ENCODE measurements at regions of chr15 and their contacts with region 1.

Region 1: GRCh38 chr15:90233376-90234095 is at the start of gene CIB1:
- DNase-seq: peak; percentile 98
- H3K4me3 Mint-ChIP-seq: peak within 1 kb of the TSS; percentile 89
- H3K27ac Mint-ChIP-seq: peak within 1 kb of the TSS; percentile 90
- H3K4me1 Mint-ChIP-seq: peaks cover 49% of the 10 kb centered on the region
- H3K27me3 Mint-ChIP-seq: no peaks in the 10 kb centered on the region
- total RNA-seq, gene CIB1: 156 to 171 TPM

Region 2: GRCh38 chr15:89893696-89894455 is 339.7 kb before region 1 on chr15 and contains the start of gene AP3S2:
- CTCF ChIA-PET with region 1: interaction called, 3 read pairs
- intact Hi-C with region 1: loop called (anchors 1 kb)
- DNase-seq: peak; percentile 94
- H3K4me3 Mint-ChIP-seq: peak within 1 kb of the TSS; percentile 97
- H3K27ac Mint-ChIP-seq: peak within 1 kb of the TSS; percentile 96
- H3K4me1 Mint-ChIP-seq: peaks cover 42% of the 10 kb centered on the region
- H3K27me3 Mint-ChIP-seq: no peaks in the 10 kb centered on the region
- total RNA-seq, gene AP3S2: 20.2 to 25.2 TPM

Region 3: GRCh38 chr15:90037961-90038631 is 195.4 kb before region 1 on chr15:
- CTCF ChIA-PET with region 1: no interaction called
- intact Hi-C with region 1: loop called (anchors 5 kb)
- DNase-seq: peak; percentile 86
- H3K4me3 Mint-ChIP-seq: no peak overlapping the region
- H3K27ac Mint-ChIP-seq: peak overlapping the region; percentile 92
- H3K4me1 Mint-ChIP-seq: peaks cover 69% of the 10 kb centered on the region
- H3K27me3 Mint-ChIP-seq: no peaks in the 10 kb centered on the region

Region 4: GRCh38 chr15:90143166-90143655 is 90.3 kb before region 1 on chr15:
- CTCF ChIA-PET with region 1: interaction called, 6 read pairs
- intact Hi-C with region 1: loop called (anchors 1 kb)
- DNase-seq: peak; percentile 86
- H3K4me3 Mint-ChIP-seq: peak overlapping the region; percentile 24
- H3K27ac Mint-ChIP-seq: no peak overlapping the region
- H3K4me1 Mint-ChIP-seq: peaks cover 21% of the 10 kb centered on the region
- H3K27me3 Mint-ChIP-seq: no peaks in the 10 kb centered on the region

Region 5: GRCh38 chr15:90201130-90201949 is 32.2 kb before region 1 on chr15 and contains the start of gene SEMA4B:
- CTCF ChIA-PET with region 1: interaction called, 4 read pairs
- intact Hi-C with region 1: loop called (anchors 1 kb)
- DNase-seq: peak; percentile 72
- H3K4me3 Mint-ChIP-seq: peak within 1 kb of the TSS; percentile 77
- H3K27ac Mint-ChIP-seq: peak within 1 kb of the TSS; percentile 75
- H3K4me1 Mint-ChIP-seq: peaks cover 11% of the 10 kb centered on the region
- H3K27me3 Mint-ChIP-seq: peaks cover 2% of the 10 kb centered on the region
- total RNA-seq, gene SEMA4B: 6.8 to 8.6 TPM

Region 6: GRCh38 chr15:90286678-90287077 is 53.1 kb after region 1 on chr15:
- CTCF ChIA-PET with region 1: no interaction called
- intact Hi-C with region 1: loop called (anchors 1 kb)
- DNase-seq: peak; percentile 62
- H3K4me3 Mint-ChIP-seq: no peak overlapping the region
- H3K27ac Mint-ChIP-seq: no peak overlapping the region
- H3K4me1 Mint-ChIP-seq: no peaks in the 10 kb centered on the region
- H3K27me3 Mint-ChIP-seq: no peaks in the 10 kb centered on the region

Region 7: GRCh38 chr15:90594301-90594701 is 360.8 kb after region 1 on chr15:
- CTCF ChIA-PET with region 1: no interaction called
- intact Hi-C with region 1: loop called (anchors 5 kb)
- DNase-seq: peak; percentile 97
- H3K4me3 Mint-ChIP-seq: peak overlapping the region; percentile 77
- H3K27ac Mint-ChIP-seq: peak overlapping the region; percentile 99
- H3K4me1 Mint-ChIP-seq: peaks cover 77% of the 10 kb centered on the region
- H3K27me3 Mint-ChIP-seq: no peaks in the 10 kb centered on the region